Right cardiac atrium (tissue), 5 donors: ENCODE measurements at regions of chr11 and their contacts with region 1.

Region 1: DNA sequence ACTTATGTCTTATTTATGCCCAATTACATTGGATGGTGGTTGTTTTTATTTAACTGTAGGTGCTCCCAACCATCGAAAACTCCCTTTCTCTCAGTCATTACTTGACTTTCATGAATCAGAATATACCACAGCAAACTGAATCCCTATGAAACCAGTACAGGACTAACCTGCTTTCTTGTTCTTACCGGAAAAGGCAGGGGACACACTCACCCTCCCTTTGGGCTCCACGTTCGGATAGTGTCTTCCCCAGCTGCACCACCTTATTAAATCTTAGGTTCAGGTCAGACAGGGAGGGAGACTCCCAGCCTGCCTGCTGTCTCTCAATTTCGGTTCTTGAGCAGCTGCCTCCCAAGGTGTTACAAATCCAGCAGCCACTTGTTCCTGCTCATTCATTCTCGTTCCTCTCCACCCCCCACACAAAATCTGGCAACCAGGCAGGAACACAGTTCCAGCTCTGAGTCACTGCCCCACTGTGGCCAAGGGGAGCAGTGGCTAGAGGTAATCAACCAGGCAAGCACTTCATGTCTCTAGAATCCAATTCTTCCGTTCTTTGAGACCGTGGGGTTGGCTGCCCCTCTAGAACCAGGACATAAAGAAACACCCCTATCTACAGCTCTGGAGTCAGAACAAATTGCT is 133.0 kb downstream of the PLEKHA7 start:
- DNase-seq: peak; percentile 70 to 81 (median 79)
- ATAC-seq: peak; percentile 86 to 91
- H3K4me3 ChIP-seq: no peak overlapping the region
- H3K27ac ChIP-seq: no peak overlapping the region
- H3K4me1 ChIP-seq: peaks cover 7% of the 10 kb centered on the region
- H3K27me3 ChIP-seq: no peaks in the 10 kb centered on the region

Region 2: DNA sequence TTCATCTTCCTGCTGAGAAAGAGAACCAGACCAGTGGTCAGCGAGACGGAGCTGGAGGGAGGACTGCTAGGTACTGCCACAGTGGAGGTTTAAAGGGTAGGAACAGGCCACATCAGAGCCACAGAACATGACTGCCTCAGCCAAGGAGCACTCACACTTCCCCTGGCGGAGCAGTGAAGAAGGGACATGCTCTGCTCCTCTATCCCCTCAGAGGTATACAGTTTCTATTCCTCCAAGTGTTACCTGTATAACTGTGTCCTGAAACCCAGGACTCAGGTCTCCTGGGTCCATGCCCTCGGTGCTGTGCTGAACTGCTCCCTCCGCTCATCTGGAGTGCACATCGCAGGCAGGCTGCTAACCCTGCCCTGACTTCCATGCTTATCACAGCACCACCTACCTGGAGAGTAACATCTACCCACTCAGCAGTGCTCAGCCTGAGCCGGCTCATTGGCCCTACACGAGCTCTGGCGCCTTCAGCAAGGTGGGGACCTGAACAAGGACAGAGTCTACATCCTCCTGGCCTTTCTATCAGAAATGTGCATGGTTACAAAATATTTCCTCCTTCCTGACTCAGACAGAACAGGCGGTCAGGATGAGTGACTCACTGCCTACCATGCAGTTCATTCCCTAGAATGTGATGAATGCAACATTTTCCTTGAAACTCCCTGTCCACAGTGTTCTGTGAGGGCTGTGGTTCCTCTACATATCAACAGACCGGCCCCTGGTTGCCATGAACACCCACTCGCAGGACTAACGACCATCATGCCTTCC is 89.8 kb before region 1 on chr11:
- intact Hi-C with region 1: loop called in 2 of 4 experiments (anchors 5 kb)
- DNase-seq: peak in 1 of 3 donors; percentile 53
- ATAC-seq: peak; percentile 74 to 79
- H3K4me3 ChIP-seq: no peak overlapping the region
- H3K27ac ChIP-seq: peak overlapping the region; percentile 55
- H3K4me1 ChIP-seq: peaks cover 24% of the 10 kb centered on the region
- H3K27me3 ChIP-seq: no peaks in the 10 kb centered on the region